ENCODE measurements at regions of chr1 and their contacts with region 1.

Region 1: GRCh38 chr1:3275471-3276340 is 178.8 kb upstream of the ARHGEF16 start:
- DNase-seq: peak; percentile 39 to 86
- H3K4me3 ChIP-seq: peak overlapping the region in 1 of 2 donors; percentile 44
- H3K27ac ChIP-seq: peak overlapping the region; percentile 91 to 93
- H3K4me1 ChIP-seq: peaks cover 12 to 36% of the 10 kb centered on the region in 2 donors
- H3K27me3 ChIP-seq: no peaks in the 10 kb centered on the region
- CTCF ChIP-seq: no peak

Region 2: GRCh38 chr1:3126756-3127597 is 148.7 kb before region 1 on chr1:
- intact Hi-C with region 1: loop called (anchors 5 kb)
- DNase-seq: no peak
- H3K4me3 ChIP-seq: peak overlapping the region; percentile 30 to 32
- H3K27ac ChIP-seq: peak overlapping the region; percentile 86 to 91
- H3K4me1 ChIP-seq: peaks cover 49 to 96% of the 10 kb centered on the region in 2 donors
- H3K27me3 ChIP-seq: no peaks in the 10 kb centered on the region
- CTCF ChIP-seq: no peak

Region 3: DNA sequence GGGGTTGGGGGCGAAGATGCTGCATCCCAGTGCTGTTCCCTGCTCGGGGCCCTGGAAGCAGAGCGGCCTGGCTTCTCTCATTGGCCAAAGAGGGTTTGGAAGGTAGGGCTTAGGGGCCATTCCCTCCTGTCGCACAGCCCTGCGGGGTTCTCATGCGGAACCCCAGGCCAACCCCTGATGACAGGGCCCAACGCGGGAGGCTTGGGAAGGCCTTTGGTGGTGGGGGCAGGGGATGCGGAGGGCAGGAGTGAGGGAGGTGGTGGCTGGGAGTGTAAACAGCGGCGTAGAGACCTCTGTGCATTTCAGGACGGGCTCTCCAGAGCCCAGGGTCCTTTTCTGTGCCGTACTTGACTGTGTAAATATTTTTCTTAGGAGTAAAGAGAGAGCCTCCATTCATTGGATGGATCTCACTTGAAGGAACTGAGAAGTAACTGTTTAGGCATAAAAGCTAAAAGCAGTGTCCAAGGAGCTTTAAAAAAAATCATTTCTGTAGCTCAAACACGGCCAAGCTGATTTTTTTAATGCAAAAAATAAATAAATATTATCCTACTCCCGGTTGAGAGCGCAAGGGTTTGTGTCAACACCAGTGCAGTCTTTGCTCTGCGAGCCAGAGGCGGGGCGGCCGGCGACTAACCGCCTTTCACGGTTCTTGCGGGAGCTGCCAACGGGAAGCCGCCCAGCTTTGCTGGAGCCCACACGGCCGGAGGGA is 37.6 kb before region 1 on chr1:
- intact Hi-C with region 1: loop called (anchors 2 kb)
- DNase-seq: peak in 1 of 2 donors; percentile 82
- H3K4me3 ChIP-seq: peak overlapping the region in 1 of 2 donors; percentile 35
- H3K27ac ChIP-seq: peak overlapping the region; percentile 73 to 83
- H3K4me1 ChIP-seq: peaks cover 6 to 38% of the 10 kb centered on the region in 2 donors
- H3K27me3 ChIP-seq: no peaks in the 10 kb centered on the region
- CTCF ChIP-seq: no peak